ENCODE measurements at regions of chr1 and their contacts with region 1.

Region 1: DNA sequence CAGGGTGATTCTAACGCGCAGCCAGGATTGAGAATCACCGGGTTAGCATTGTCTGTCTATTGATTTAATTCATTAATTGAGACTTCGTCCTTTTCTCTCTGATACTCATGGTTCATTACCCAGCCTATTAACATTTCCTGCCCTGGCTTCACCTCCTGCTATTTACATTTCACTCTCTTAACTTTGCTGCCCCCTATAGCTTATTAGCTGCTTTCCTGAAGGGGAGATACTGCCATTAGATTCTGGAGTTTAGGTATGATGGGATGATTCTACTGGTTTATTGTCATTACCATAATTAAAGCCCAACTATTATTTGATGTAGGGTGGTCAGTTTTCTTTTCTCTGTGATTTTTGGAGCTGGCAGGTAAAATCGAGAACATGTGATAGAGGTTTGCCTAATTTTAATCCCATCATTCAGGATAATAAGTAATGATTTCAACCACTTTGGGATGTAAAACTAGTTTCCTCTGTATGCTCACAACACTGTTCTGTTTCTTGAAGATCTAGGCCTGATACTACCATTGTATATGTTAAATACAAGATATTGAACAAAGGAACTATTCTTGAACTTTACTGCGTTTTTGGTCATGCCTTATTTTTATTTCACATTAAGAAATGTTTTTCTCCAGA is 6.4 kb downstream of the PPP2R5A start:
- DNase-seq: peak in 1 of 2 donors; percentile 78
- ATAC-seq: peak; percentile 87 to 92 (median 92)
- H3K4me3 ChIP-seq: no peak overlapping the region
- H3K4me3 Mint-ChIP-seq: peak overlapping the region; percentile 71
- H3K27ac ChIP-seq: no peak overlapping the region
- H3K27ac Mint-ChIP-seq: peak overlapping the region; percentile 39 to 81
- H3K4me1 ChIP-seq: peaks cover 17% of the 10 kb centered on the region
- H3K4me1 Mint-ChIP-seq: peaks cover 86 to 91% of the 10 kb centered on the region in 2 donors
- H3K27me3 ChIP-seq: no peaks in the 10 kb centered on the region
- H3K27me3 Mint-ChIP-seq: no peaks in the 10 kb centered on the region
- CTCF ChIP-seq: peak; percentile 81

Region 2: GRCh38 chr1:212035123-212035834 is 256.3 kb before region 1 on chr1 and contains the starts of genes DTL and INTS7:
- intact Hi-C with region 1: loop called (anchors 1 kb)
- DNase-seq: peak; percentile 95 to 100
- ATAC-seq: peak; percentile 89 to 94 (median 90)
- H3K4me3 ChIP-seq: peak within 1 kb of the TSS; percentile 75
- H3K4me3 Mint-ChIP-seq: peak within 1 kb of the TSS; percentile 96
- H3K27ac ChIP-seq: peak within 1 kb of the TSS; percentile 65
- H3K27ac Mint-ChIP-seq: peak within 1 kb of the TSS; percentile 94 to 98
- H3K4me1 ChIP-seq: peaks cover 14% of the 10 kb centered on the region
- H3K4me1 Mint-ChIP-seq: peaks cover 42 to 51% of the 10 kb centered on the region in 2 donors
- H3K27me3 ChIP-seq: no peaks in the 10 kb centered on the region
- H3K27me3 Mint-ChIP-seq: no peaks in the 10 kb centered on the region
- CTCF ChIP-seq: peak; percentile 95
- total RNA-seq, gene DTL: 1.1 to 4.0 (median 3.3) TPM
- total RNA-seq, gene INTS7: 10.0 to 20.3 (median 11.0) TPM

Region 3: GRCh38 chr1:212062832-212063438 is 228.7 kb before region 1 on chr1:
- intact Hi-C with region 1: loop called (anchors 1 kb)
- DNase-seq: peak in 1 of 2 donors; percentile 62
- ATAC-seq: peak in 2 of 3 donors; percentile 60 to 67
- H3K4me3 ChIP-seq: no peak overlapping the region
- H3K4me3 Mint-ChIP-seq: no peak overlapping the region
- H3K27ac ChIP-seq: no peak overlapping the region
- H3K27ac Mint-ChIP-seq: no peak overlapping the region
- H3K4me1 ChIP-seq: no peaks in the 10 kb centered on the region
- H3K4me1 Mint-ChIP-seq: no peaks in the 10 kb centered on the region
- H3K27me3 ChIP-seq: no peaks in the 10 kb centered on the region
- H3K27me3 Mint-ChIP-seq: no peaks in the 10 kb centered on the region
- CTCF ChIP-seq: peak; percentile 90

Region 4: DNA sequence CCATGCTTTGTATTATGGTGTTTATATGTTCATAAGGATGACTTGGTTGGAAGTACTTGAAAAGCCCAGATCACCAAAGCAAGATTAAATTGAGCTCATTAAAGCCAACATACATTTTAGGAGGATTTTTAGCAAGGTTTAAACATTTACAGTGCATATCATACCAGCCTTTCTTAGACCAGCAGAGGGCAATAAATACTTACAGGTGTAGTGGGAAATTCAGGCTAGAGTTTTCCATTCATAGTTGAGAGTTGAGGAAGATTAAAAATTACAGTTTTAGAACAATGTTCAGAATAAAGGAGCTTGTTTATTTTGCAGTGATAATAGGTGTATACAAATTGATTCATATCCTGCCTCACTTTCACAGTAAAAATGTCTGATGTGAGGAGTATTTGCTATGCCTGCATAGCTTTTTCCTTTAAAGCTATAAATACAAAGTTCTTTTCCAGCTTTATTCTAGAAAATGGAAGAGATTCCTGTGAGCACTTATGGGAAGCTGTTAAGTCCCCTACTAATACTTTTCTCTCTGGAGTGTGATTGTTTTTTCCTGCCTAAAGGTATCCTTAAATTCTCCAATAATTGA is 220.8 kb before region 1 on chr1:
- intact Hi-C with region 1: loop called (anchors 1 kb)
- DNase-seq: peak in 1 of 2 donors; percentile 71
- ATAC-seq: peak in 2 of 3 donors; percentile 72 to 75
- H3K4me3 ChIP-seq: no peak overlapping the region
- H3K4me3 Mint-ChIP-seq: no peak overlapping the region
- H3K27ac ChIP-seq: no peak overlapping the region
- H3K27ac Mint-ChIP-seq: no peak overlapping the region
- H3K4me1 ChIP-seq: no peaks in the 10 kb centered on the region
- H3K4me1 Mint-ChIP-seq: no peaks in the 10 kb centered on the region
- H3K27me3 ChIP-seq: no peaks in the 10 kb centered on the region
- H3K27me3 Mint-ChIP-seq: no peaks in the 10 kb centered on the region
- CTCF ChIP-seq: peak; percentile 80

Measured in natural killer cell (primary cell).